Right lobe of liver (tissue), 6 donors: ENCODE measurements at regions of chr5 and their contacts with region 1.

Region 1: GRCh38 chr5:75053304-75054133 is 1.2 kb upstream of the GCNT4 start:
- DNase-seq: peak; percentile 67 to 73 (median 70)
- ATAC-seq: peak; percentile 60 to 75 (median 74)
- H3K4me3 ChIP-seq: peak overlapping the region; percentile 57 to 84 (median 74)
- H3K27ac ChIP-seq: peak overlapping the region; percentile 82 to 89 (median 82)
- H3K4me1 ChIP-seq: peaks cover 0 to 18% (median 0%) of the 10 kb centered on the region in 4 donors
- H3K27me3 ChIP-seq: no peaks in the 10 kb centered on the region
- CTCF ChIP-seq: peak in 2 of 4 donors; percentile 28 to 29
- POLR2A ChIP-seq: no peak

Region 2: DNA sequence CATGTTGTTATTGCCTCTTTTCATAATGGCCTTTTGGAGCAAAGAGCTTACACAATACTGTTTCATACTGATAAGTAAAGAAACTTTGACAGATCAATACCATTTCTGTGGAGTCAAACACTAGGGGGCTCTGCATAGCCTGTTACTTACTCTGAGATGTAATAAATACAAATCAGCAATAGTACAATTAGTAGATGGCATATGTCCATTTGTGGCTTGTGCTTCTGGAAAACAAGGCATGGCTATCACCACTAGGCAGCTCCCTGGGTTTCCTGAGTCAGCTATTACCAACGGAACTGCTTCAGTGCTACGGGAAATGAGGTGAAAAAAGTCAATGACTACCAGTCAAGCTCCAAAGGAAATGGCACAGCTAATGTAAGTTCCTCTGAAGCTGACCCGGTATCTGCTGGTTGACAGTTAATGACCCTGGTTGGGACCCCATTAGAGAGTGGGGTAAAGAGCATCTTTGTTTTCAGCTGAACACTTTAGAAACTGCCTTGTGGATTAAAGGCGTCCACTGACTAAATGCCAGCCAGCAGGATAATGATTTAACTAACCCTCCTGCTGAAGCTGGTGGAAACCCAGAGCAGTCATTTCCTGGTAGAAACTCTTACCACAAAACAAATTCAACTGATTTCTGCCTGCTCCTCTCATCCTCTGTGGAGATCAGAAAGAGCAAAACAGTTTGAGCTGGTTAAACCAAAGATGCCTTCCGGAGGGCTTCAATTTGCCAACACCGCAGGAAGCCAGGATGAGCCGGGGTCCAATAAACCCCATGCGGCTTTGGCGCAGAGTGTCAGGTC is 118.4 kb before region 1 on chr5:
- intact Hi-C with region 1: loop called in 1 of 2 experiments (anchors 10 kb)
- DNase-seq: no peak
- ATAC-seq: peak; percentile 90 to 96 (median 93)
- H3K4me3 ChIP-seq: no peak overlapping the region
- H3K27ac ChIP-seq: peak overlapping the region in 2 of 3 donors; percentile 24 to 30
- H3K4me1 ChIP-seq: peaks cover 0 to 9% (median 0%) of the 10 kb centered on the region in 4 donors
- H3K27me3 ChIP-seq: no peaks in the 10 kb centered on the region
- CTCF ChIP-seq: peak; percentile 58 to 78 (median 65)
- POLR2A ChIP-seq: no peak